ENCODE measurements at regions of chr9 and their contacts with region 1.

Region 1: GRCh38 chr9:136283291-136284235 is 20.3 kb downstream of the CCDC187 start:
- DNase-seq: peak; percentile 91
- CTCF ChIP-seq: peak; percentile 99

Region 2: GRCh38 chr9:136170006-136170901 is 113.3 kb before region 1 on chr9:
- CTCF ChIA-PET with region 1: interaction called, 23 read pairs
- POLR2A ChIA-PET with region 1: no interaction called
- DNase-seq: peak; percentile 87
- CTCF ChIP-seq: peak; percentile 76

Region 3: GRCh38 chr9:136245219-136246150 is 38.1 kb before region 1 on chr9 and contains the start of gene QSOX2:
- CTCF ChIA-PET with region 1: no interaction called
- POLR2A ChIA-PET with region 1: no interaction called
- DNase-seq: peak; percentile 93
- CTCF ChIP-seq: no peak

Region 4: GRCh38 chr9:136267261-136268111 is 16.1 kb before region 1 on chr9:
- CTCF ChIA-PET with region 1: interaction called, 26 read pairs
- POLR2A ChIA-PET with region 1: interaction called, 4 read pairs
- DNase-seq: peak; percentile 99
- CTCF ChIP-seq: peak; percentile 56